Panc1 (cell line): ENCODE measurements at regions of chr1 and their contacts with region 1.

Region 1: DNA sequence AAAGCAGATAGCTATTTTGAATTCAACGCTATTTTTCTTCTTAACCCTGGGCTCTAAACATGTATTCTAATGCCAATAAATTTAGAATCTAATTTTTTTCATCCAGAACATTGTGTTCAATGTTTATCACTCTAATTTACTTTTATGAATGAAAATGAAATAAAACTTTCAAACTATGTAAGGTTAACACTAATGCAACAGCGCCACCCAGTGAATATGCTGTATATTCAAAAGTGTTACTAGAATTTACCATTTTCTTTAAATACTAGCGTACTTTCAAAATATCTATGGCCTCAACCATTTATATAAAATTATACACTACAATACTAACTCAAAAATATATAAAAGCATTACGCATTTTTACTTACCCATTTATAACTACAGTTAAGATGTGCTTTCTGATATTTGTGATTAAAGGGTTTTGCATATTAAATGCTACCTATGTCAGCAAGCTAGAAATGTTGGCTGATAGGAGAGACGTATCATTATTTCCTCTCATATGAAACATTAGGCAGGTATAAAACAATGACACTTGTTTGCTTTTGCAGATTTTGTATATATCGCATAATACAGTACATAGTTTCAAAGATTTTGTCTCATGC is 5.9 kb upstream of the NUF2 start:
- DNase-seq: no peak
- ATAC-seq: no peak
- H3K4me3 ChIP-seq: no peak overlapping the region
- H3K27ac ChIP-seq: no peak overlapping the region
- H3K4me1 ChIP-seq: peaks cover 3% of the 10 kb centered on the region
- H3K27me3 ChIP-seq: no peaks in the 10 kb centered on the region
- CTCF ChIP-seq: peak; percentile 48; the same call in 1 of the 2 replicates

Region 2: DNA sequence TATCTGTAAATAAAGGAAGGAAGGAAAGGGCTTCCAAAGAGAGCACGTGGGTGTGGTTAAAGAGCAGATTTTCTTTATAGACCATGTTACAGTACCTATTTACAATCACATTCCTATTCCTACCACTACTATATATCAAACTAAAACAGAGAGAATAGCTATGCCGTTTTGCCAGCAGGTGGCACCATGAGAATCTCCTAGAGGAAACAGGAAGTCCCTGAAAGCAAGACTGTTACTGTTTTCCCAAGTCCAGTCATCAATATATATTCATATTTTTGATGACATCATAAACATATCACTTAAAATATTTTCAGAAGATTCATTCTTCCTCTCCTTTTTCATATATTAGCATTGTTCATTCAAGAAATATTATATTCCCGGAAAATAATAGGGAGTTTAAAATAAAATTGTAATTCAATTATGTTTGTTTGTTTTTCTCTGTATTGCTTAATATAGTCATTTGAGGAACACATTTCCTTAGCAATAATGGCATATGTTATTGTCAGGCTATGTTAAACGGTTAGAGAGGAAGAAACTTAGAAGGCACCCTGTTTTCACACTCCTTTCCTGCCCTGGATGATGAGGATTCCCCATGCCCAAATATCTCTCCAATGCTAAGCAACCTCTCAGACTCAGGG is 461.5 kb before region 1 on chr1:
- CTCF ChIA-PET with region 1: interaction called, 5 read pairs
- POLR2A ChIA-PET with region 1: no interaction called
- in situ Hi-C with region 1: no loop called
- intact Hi-C with region 1: loop called (anchors 2 kb)
- DNase-seq: no peak
- ATAC-seq: peak; percentile 85
- H3K4me3 ChIP-seq: no peak overlapping the region
- H3K27ac ChIP-seq: no peak overlapping the region
- H3K4me1 ChIP-seq: no peaks in the 10 kb centered on the region
- H3K27me3 ChIP-seq: no peaks in the 10 kb centered on the region; the same call in 1 of the 2 replicates
- CTCF ChIP-seq: peak; percentile 79; the same call in 1 of the 2 replicates

Region 3: GRCh38 chr1:163022129-163022528 is 293.7 kb before region 1 on chr1:
- CTCF ChIA-PET with region 1: no interaction called
- POLR2A ChIA-PET with region 1: no interaction called
- in situ Hi-C with region 1: no loop called
- intact Hi-C with region 1: no loop called
- DNase-seq: no peak
- ATAC-seq: no peak
- H3K4me3 ChIP-seq: no peak overlapping the region
- H3K27ac ChIP-seq: no peak overlapping the region
- H3K4me1 ChIP-seq: no peaks in the 10 kb centered on the region
- H3K27me3 ChIP-seq: no peaks in the 10 kb centered on the region
- CTCF ChIP-seq: no peak

Region 4: DNA sequence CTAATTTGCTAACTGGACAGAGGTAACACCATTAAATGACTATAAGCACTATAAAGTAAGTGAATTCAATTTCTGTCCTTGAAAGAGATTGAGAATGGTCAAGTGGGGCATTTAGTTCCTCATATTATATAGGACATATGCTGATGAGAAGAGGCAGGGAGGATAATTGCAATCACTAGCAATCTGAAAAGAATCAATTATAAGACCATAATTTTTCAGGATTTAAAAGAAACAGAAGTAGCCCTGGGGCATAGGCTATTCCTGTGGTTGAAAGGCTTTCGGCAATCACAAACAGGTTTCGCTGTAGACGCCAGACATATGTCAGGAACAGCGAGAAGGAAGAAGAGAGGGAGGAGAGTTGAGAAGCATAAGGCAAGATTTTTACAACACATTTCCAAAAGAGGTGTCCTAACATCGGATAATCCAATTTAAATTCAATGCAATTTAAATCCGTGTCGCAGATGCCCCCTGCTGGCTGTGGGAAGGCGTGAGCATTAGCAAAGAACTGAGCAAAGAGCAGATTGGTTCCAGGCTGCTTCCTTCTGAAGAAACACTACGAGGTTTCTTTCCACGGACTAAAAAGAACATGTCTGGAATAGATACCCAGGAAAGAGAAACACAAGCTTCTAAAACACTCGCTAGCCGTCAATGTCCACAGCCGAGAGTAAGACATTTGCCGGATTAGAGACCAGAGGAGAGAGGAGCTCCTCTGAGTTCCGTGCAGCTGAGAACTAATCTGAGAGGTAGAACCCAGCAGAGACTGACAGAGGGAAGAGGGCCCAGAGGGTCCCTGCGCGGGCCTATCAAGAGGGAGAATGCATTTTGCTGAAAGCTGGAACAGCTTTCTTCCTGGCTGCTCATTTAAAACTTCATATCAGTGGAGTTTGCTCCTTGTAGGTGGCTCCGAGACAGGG is 141.1 kb before region 1 on chr1:
- CTCF ChIA-PET with region 1: no interaction called
- POLR2A ChIA-PET with region 1: no interaction called
- in situ Hi-C with region 1: no loop called
- intact Hi-C with region 1: loop called (anchors 10 kb)
- DNase-seq: no peak
- ATAC-seq: peak; percentile 87
- H3K4me3 ChIP-seq: peak overlapping the region in 1 of 2 experiments; percentile 27; a peak in 2 of 4 replicates
- H3K27ac ChIP-seq: no peak overlapping the region
- H3K4me1 ChIP-seq: 0 out of 2 replicates have a peak, but pooled peaks cover 3% of the 10 kb centered on the region
- H3K27me3 ChIP-seq: no peaks in the 10 kb centered on the region
- CTCF ChIP-seq: peak; percentile 93

Region 5: GRCh38 chr1:163346346-163346870 is 30.5 kb after region 1 on chr1:
- CTCF ChIA-PET with region 1: no interaction called
- POLR2A ChIA-PET with region 1: no interaction called
- in situ Hi-C with region 1: no loop called
- intact Hi-C with region 1: no loop called
- DNase-seq: no peak
- ATAC-seq: no peak
- H3K4me3 ChIP-seq: no peak overlapping the region
- H3K27ac ChIP-seq: no peak overlapping the region
- H3K4me1 ChIP-seq: no peaks in the 10 kb centered on the region
- H3K27me3 ChIP-seq: no peaks in the 10 kb centered on the region
- CTCF ChIP-seq: no peak

Region 6: GRCh38 chr1:163580926-163581325 is 265.1 kb after region 1 on chr1:
- CTCF ChIA-PET with region 1: no interaction called
- POLR2A ChIA-PET with region 1: no interaction called
- in situ Hi-C with region 1: no loop called
- intact Hi-C with region 1: no loop called
- DNase-seq: no peak
- ATAC-seq: no peak
- H3K4me3 ChIP-seq: no peak overlapping the region
- H3K27ac ChIP-seq: no peak overlapping the region
- H3K4me1 ChIP-seq: no peaks in the 10 kb centered on the region
- H3K27me3 ChIP-seq: no peaks in the 10 kb centered on the region
- CTCF ChIP-seq: no peak